BJ (cell line): ENCODE measurements at regions of chr1 and their contacts with region 1.

Region 1: DNA sequence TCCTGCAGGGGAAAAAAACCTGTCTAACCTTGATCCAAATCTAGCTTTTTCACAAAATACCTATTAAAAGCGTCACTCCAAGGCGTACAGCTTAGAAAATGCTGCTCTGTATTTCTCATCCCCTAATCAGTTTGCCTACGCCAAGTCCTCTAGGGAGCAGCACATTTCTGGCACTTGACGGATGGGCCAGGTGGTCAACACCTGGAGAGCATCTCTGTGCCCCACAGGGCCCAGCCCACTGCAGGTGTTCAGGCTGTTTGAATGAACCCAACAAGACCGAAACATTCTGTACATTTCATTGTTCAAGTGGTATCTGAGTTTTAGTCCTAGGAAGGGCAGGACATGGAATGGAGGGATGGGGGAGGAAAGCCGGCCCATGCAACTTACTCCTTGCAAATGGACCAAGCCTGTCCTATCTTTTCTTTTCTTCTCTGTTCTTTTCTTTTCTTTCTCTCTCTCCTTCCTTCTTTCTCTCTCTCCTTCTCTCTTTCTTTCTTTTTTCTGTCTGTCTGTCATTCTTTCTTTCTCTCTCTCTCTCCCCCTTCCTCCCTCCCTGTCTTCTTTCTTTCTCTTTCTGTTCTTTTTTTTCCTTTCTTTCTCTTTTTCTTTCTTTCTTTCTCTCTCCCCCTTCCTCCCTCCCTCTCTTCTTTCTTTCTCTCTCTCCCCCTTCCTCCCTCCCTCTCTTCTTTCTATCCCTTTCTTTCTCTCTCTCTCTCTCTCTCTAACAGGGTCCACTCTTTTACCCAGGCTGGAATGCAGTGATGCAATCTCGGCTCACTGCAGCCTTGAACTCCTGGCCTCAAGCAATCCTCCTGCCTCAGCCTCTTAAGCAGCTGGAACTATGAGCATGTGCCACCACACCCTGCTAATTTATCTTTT is 29.1 kb downstream of the IGFN1 start:
- DNase-seq: no peak
- H3K4me3 ChIP-seq: no peak overlapping the region
- H3K27me3 ChIP-seq: peaks cover 4% of the 10 kb centered on the region
- CTCF ChIP-seq: no peak

Region 2: DNA sequence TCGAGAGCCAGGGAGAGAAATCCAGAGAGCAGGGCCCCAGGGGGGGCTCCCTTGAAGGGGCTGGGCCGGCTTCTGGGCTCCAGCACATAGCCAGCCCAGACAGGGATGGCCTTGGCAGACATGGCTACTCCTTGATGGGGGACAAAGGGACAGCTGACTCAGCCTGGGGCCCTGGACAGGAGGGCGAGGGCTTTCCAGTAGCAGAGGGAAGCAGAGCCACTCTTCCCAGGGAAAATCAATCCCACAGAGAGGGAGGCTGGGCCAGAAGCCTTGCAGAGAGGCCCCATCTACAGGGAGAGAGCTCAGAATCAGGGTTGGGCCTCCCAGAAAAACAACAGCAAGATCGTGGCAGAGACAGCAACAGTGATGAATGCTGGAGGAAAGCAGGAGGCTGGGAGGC is 13.5 kb before region 1 on chr1:
- CTCF ChIA-PET with region 1: interaction called, 17 read pairs
- POLR2A ChIA-PET with region 1: no interaction called
- DNase-seq: no peak
- H3K4me3 ChIP-seq: no peak overlapping the region
- H3K27me3 ChIP-seq: peaks cover 16% of the 10 kb centered on the region
- CTCF ChIP-seq: no peak